Esophagus muscularis mucosa (tissue), 4 donors: ENCODE measurements at regions of chr19 and their contacts with region 1.

Region 1: GRCh38 chr19:29715701-29716581 is 880 bp upstream of the C19orf12 start:
- DNase-seq: no peak
- H3K4me3 ChIP-seq: peak overlapping the region; percentile 68 to 100 (median 98)
- H3K27ac ChIP-seq: peak overlapping the region; percentile 91 to 97 (median 94)
- H3K4me1 ChIP-seq: peaks cover 17 to 53% (median 42%) of the 10 kb centered on the region in 4 donors
- H3K27me3 ChIP-seq: no peaks in the 10 kb centered on the region
- CTCF ChIP-seq: no peak
- EP300 ChIP-seq: no peak
- POLR2A ChIP-seq: no peak

Region 2: DNA sequence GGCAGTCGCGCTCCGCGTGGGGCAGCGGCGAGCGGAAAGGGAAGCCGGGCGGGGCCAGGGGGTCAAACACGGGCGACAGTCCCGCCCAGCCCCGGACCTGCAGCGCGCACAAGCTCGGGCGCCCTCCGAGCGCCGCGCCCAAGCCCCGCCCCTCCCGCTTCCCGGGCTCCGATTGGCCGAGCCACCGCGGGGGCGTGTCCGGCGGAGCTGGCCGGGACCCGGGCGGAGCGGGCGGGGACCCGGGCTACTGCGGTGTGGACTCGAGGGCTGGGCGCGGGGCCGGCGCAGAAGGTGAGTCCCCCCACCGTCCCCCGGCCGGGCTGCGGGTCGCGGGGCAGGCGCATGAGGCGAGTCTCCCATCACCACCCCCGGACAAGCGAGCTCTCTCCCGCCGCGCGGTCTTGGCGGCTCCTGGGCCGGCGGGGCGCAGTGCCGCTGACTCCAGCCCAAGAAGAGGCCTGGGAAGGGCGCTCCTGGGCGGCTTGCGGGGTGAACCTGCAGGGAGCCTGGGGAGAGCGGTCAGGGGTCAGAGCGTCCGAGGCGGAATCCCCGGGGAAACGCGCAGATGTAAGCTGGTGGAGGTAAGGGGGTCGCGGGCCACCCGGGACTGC is 50.6 kb before region 1 on chr19 and contains the start of gene PLEKHF1:
- intact Hi-C with region 1: no loop called
- DNase-seq: peak; percentile 96
- H3K4me3 ChIP-seq: peak within 1 kb of the TSS; percentile 72 to 93 (median 80)
- H3K27ac ChIP-seq: peak within 1 kb of the TSS; percentile 84 to 93 (median 87)
- H3K4me1 ChIP-seq: peaks cover 71 to 94% (median 92%) of the 10 kb centered on the region in 4 donors
- H3K27me3 ChIP-seq: no peaks in the 10 kb centered on the region
- CTCF ChIP-seq: no peak
- EP300 ChIP-seq: no peak
- POLR2A ChIP-seq: peak; percentile 65
- total RNA-seq, gene PLEKHF1: 27.4 to 58.6 (median 36.1) TPM

Region 3: DNA sequence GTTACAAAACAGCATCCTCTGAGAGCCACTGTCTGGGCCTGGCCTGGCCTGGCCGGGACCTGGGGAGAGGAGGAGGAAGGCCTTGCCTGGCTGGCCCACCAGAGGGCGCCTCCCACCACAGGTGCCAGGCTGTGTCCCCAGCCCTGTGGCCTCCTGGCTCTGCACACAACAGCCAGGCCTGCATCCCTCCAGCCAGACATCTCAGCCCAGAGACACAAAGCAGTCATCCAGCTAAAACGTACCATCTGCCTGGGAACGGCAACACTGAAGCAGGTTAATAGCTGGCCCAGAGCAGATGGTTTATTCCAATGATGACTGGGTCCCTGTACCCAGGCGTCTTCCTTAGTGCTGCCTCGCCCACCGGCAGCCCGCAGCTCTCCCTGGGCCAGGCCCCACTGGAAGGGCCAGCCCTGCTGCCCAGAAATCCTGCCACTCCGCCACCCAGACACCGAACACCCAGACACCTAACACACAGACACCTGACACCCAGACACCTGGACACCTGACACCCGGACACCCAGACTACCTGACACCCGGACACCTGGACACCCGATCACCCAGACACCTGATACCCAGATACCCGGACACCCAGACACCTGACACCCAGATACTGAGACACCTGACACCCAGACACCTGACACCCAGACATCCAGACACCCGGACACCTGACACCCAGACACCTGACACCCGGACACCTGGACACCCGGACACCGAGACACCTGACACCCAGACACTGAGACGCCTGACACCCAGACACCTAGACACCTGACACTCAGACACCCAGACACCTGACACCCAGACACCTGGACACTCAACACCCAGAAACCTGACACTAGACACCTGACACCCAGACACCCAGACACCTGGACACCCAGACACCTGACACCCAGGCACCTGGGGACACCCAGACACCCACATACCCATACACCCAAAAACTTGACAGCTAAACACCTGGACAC is 21.0 kb before region 1 on chr19:
- intact Hi-C with region 1: loop called (anchors 1 kb)
- DNase-seq: peak; percentile 94
- H3K4me3 ChIP-seq: no peak overlapping the region
- H3K27ac ChIP-seq: peak overlapping the region in 3 of 4 donors; percentile 36 to 41 (median 37)
- H3K4me1 ChIP-seq: peaks cover 0 to 25% (median 23%) of the 10 kb centered on the region in 4 donors
- H3K27me3 ChIP-seq: no peaks in the 10 kb centered on the region
- CTCF ChIP-seq: peak; percentile 79 to 94 (median 84)
- EP300 ChIP-seq: no peak
- POLR2A ChIP-seq: no peak

Region 4: DNA sequence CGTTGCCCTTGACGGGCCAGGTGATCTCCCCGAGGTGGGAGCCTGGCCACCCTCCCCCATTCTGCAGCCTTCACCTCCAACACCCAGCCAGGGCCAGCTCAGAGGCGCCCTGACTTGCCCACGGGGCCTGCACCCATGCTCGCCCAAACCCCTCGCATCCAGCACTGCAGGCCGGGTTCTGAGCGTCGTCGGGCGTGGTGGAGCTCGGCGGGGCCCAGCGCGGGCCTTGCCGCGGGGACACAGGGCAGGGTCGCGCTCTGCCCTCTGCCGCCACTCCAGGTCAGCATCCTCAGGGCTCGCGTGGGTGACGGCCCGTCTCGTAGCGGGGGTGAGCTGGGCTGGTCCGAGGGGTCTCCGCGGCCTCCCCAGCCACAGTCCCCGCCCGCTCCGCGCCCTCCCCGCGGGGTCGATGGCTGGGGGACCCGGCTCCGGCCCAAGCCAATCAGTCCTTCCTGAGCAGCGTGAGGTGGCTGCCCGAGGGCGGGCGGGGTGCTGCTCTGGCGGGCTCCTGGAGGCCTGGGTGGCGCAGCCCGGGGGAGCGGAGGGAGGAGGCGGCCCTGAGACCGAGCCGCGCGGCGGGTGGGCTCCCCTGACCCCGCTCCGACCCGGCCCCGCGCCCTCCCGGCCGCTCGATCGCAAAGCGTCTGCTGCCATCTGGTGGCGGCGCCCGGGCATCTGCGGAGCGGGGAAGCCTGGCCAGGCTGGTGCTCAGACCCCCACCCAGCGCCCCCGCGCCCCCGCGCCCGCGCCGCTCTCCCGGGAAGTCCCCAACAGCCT is 157.3 kb after region 1 on chr19:
- intact Hi-C with region 1: no loop called
- DNase-seq: no peak
- H3K4me3 ChIP-seq: peak overlapping the region; percentile 52 to 63 (median 54)
- H3K27ac ChIP-seq: no peak overlapping the region
- H3K4me1 ChIP-seq: peaks cover 18 to 42% (median 36%) of the 10 kb centered on the region in 4 donors
- H3K27me3 ChIP-seq: peaks cover 0 to 41% (median 12%) of the 10 kb centered on the region in 4 donors
- CTCF ChIP-seq: peak; percentile 81 to 98 (median 95)
- EP300 ChIP-seq: no peak
- POLR2A ChIP-seq: no peak

Region 5: DNA sequence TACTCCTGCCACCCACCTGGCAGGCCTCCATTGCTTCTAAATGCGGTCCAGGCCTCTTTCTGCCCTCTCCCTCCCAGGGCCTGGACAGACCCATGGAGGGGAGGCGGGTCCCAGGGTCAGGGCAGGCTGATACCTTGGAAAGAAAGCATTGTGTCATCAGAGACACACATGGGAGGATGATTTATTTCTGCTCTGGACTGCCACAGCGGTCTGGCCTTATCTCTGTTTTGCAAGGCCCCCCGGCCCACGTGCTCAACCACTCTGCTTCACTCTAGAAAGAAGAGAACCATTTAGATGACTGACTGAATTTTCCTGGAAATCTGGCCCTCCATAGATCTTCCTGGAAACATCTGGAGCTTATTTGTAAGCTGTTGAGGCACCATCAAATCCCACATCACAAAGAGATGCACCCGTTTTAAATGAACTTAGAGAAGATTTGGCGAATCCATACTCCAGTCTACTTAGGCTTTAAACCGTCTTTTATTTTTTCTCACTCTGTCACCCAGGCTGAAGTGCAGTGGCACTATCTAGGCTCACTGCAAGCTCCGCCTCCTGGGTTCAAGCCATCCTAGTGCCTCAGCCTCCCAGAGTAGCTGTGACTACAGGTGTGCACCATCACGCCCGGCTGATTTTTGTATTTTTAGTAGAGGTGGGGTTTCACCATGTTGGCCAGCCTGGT is 177.8 kb after region 1 on chr19:
- intact Hi-C with region 1: no loop called
- DNase-seq: no peak
- H3K4me3 ChIP-seq: no peak overlapping the region
- H3K27ac ChIP-seq: no peak overlapping the region
- H3K4me1 ChIP-seq: no peaks in the 10 kb centered on the region
- H3K27me3 ChIP-seq: no peaks in the 10 kb centered on the region
- CTCF ChIP-seq: no peak
- EP300 ChIP-seq: no peak
- POLR2A ChIP-seq: no peak